Activated CD4-positive, alpha-beta T cell treated with anti-CD3 and anti-CD28 coated beads, Interleukin-2, amount 10 ng/mL, durations not matched to agents 7 days and 5 days (primary cell): ENCODE measurements at regions of chr12 and their contacts with region 1.

Region 1: GRCh38 chr12:55073043-55074022 is 52.9 kb upstream of the OR9K2 start:
- DNase-seq: peak; percentile 86
- H3K4me3 Mint-ChIP-seq: no peak overlapping the region
- H3K27ac Mint-ChIP-seq: no peak overlapping the region
- H3K4me1 Mint-ChIP-seq: peaks cover 2% of the 10 kb centered on the region
- H3K27me3 Mint-ChIP-seq: peaks cover 28% of the 10 kb centered on the region

Region 2: DNA sequence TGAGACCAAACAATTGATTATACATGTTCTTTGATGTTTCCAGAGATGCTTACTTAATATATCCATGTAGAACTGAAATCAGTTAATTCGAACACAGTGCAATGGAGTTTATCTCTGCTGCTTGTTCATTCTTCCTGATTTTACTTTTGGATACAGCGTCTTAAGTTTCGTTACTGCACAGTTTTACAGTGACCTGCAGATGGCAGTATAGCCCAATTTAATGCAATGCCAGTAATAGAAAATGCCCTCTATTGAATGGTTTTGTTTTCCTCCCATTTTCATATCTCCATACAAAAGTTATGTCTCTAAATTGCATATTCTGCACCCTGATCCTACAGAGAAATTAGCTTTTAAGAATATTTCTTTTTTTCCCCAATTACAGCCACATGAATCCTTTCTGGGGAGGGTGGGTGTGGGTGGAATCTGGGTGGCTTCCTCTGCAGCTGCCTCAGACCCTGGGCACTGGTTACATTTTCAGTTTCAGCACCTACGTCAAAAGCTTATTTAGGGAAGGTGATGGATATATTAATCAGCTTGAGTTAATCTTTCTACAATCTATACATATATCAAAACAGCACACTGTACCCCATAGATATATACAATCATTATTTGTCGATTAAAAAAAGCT is 324.0 kb before region 1 on chr12:
- CTCF ChIA-PET with region 1: interaction called, 23 read pairs
- POLR2A ChIA-PET with region 1: no interaction called
- DNase-seq: peak; percentile 75
- H3K4me3 Mint-ChIP-seq: peak overlapping the region; percentile 44
- H3K27ac Mint-ChIP-seq: no peak overlapping the region
- H3K4me1 Mint-ChIP-seq: peaks cover 22% of the 10 kb centered on the region
- H3K27me3 Mint-ChIP-seq: peaks cover 19% of the 10 kb centered on the region

Region 3: DNA sequence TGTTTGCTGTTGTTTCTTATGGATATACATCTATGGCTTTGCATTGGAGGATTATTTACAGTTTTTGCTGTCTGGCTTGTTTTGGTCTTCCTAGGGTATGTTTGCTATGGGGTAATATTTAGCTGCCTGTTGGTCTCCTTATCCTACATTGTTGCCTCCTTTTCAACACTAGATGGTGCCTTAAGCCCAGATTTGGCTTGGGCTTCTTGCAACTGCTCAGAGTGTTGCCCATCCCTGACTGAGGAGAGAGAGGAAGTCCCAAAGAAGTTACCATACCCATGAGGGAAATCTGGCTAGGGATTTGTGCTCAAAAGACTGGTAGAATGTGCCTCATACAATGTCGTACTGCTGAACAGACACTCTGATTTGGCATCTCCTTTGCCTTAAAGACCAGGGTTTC is 313.6 kb before region 1 on chr12:
- CTCF ChIA-PET with region 1: interaction called, 11 read pairs
- POLR2A ChIA-PET with region 1: no interaction called
- DNase-seq: peak; percentile 29
- H3K4me3 Mint-ChIP-seq: no peak overlapping the region
- H3K27ac Mint-ChIP-seq: no peak overlapping the region
- H3K4me1 Mint-ChIP-seq: peaks cover 7% of the 10 kb centered on the region
- H3K27me3 Mint-ChIP-seq: peaks cover 18% of the 10 kb centered on the region

Region 4: DNA sequence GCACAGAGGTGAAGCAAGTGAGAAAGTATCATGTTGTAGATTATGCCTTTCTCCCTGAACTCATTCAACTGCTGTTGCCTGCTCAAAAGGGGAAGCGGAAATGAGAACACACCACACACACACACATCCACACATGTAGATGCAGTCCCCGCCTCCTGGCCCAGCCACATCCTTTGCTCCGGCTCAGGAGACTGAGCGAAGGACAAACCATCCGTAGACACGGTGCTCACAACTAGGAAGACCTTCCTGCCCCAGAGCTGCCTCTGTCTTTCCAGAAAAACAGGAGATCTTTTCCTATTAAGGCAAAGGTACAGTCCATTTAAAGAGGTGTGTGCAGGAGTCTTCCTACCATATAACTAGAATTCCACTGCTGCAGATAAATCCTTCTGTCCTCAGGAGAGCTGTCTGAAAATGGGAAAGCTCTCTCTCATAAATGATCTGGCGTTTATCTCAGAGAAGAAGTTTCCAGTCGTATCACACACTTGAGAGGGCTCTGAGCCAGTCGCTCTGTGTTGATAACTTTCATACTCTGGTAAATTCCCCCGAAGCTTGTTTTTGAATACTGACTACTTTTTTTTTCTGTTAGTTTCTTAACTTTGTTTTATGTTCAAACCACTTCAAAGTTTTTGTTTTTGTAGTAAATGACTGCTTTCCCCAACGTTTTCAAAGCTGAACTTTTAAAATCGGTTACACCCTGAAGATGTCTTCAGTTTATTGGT is 88.5 kb before region 1 on chr12 and contains the start of gene TESPA1:
- CTCF ChIA-PET with region 1: interaction called, 21 read pairs
- POLR2A ChIA-PET with region 1: no interaction called
- DNase-seq: peak; percentile 92
- H3K4me3 Mint-ChIP-seq: peak within 1 kb of the TSS; percentile 93
- H3K27ac Mint-ChIP-seq: peak within 1 kb of the TSS; percentile 93
- H3K4me1 Mint-ChIP-seq: peaks cover 66% of the 10 kb centered on the region
- H3K27me3 Mint-ChIP-seq: no peaks in the 10 kb centered on the region
- total RNA-seq, gene TESPA1: 113 to 136 TPM

Region 5: DNA sequence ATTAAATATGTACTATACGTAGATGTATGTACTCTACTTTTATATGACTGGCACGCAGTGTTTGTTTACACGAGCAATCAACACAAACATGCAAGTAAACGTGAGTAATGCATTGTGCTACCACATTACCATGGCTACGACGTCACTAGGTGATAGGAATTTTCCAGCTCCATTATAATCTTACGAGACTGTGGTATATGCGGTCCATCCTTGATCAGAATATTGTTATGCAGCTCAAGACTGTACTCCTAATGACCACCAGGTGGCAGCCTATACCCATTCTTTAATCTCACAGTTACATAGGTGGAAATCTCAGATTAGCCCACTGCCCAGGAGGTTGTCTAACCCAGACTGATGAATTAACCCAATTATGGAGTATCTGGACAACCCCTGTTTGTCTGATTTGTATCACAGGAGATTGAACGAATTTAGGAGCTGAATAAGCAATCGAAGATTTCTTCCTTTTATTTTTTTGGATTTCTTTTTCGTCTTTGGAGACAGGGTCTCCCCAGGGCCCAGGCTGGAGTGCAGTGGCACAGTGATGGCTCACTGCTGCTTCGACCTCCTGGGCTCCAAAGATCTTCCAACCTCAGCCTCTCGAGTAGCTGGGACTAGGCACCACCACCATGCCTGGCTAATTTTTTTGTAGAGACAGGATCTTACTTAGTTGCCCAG is 80.0 kb before region 1 on chr12:
- CTCF ChIA-PET with region 1: interaction called, 72 read pairs
- POLR2A ChIA-PET with region 1: interaction called, 3 read pairs
- DNase-seq: peak; percentile 71
- H3K4me3 Mint-ChIP-seq: no peak overlapping the region
- H3K27ac Mint-ChIP-seq: no peak overlapping the region
- H3K4me1 Mint-ChIP-seq: peaks cover 40% of the 10 kb centered on the region
- H3K27me3 Mint-ChIP-seq: no peaks in the 10 kb centered on the region

Region 6: DNA sequence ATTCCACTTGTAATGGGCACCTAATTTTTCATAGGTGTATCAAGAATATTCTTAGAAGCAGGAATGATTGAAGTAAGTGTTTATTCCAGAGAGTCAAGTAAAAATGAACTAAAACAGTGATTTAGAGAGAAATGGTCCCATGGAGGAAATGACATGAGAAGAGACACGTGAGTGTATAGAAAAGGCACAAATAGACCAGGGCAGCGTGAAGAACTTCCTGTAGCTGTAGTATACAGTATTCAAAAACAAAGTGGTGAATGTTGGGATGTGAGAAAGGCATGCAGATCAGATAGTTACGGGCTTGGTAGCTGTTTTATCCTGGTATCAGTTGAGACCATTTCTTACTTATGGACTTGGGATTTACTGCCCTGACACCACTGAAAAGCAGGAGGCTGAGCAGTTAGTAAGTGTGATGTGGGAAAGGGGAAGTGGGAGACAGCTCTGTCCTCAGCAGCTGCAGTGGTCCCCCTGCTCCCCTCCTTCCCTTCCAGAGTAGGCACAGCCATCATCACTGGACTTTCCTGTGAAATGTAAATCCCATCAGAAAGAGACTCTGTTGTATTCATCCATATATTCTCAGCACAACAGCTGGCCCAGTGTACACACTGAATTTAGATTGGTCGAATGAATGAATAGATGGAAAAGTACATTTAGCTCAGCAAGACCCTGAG is 72.0 kb before region 1 on chr12:
- CTCF ChIA-PET with region 1: interaction called, 44 read pairs
- POLR2A ChIA-PET with region 1: no interaction called
- DNase-seq: no peak
- H3K4me3 Mint-ChIP-seq: no peak overlapping the region
- H3K27ac Mint-ChIP-seq: peak overlapping the region; percentile 37
- H3K4me1 Mint-ChIP-seq: peaks cover 7% of the 10 kb centered on the region
- H3K27me3 Mint-ChIP-seq: no peaks in the 10 kb centered on the region

Region 7: DNA sequence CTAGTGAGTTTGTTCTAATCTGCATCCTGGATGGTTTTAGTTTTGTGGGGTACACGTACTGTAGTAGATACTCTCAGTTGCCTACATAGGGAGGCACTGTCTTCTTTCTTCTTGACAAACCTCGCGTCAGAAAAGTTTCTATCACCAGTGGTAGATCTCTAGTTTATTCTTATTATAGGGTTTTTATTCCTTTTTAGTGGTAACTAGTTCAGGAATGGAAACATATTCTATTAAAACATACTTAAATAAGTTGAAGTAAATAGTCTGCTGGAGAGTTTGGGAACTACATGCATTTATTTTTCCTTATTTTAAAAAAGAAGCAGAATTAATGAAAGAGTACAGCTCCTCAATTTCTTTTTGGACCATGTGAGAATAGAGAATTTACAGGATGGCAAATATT is 19.2 kb after region 1 on chr12:
- CTCF ChIA-PET with region 1: no interaction called
- POLR2A ChIA-PET with region 1: no interaction called
- DNase-seq: no peak
- H3K4me3 Mint-ChIP-seq: no peak overlapping the region
- H3K27ac Mint-ChIP-seq: no peak overlapping the region
- H3K4me1 Mint-ChIP-seq: no peaks in the 10 kb centered on the region
- H3K27me3 Mint-ChIP-seq: peaks cover 14% of the 10 kb centered on the region